ENCODE measurements at regions of chrX and their contacts with region 1.

Region 1: GRCh38 chrX:54540289-54540688 is 10.3 kb downstream of the GNL3L start:
- DNase-seq: no peak
- CTCF ChIP-seq: no peak

Region 2: DNA sequence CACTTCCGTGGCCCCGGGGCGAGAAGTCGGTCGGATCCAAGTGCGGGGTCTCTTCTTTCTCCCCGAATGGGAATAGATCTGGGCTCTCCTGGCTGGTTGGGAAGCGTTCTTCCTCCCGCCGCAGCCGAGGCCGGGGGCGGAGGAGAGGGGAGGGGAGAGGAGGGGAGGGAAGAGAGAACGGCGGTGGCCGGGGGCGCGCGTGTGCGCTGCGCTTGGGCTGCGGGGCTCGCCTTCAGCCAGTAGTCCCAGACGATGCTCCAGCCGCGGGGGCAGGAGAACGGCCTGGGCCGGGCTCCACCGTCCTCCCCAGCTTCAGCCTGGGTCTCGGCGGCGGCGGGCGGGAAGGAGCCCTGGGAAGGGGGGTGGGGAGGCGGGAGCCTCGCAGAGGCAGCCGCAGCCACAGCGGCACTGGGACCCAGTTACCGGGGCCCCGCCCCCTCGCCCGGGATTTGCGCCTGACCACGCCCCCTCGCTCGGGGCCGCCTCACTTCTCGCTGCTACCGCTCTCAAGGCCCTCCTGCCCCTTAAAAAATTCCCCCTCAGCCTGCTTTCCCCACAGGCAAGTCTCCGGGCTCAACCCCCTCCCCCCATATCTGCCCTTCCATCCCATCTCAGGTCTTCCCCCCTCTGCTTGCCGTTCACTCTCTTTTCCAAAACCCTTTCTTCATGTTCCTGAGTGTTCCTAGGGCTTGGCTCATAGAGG is 44.3 kb before region 1 on chrX and contains the start of gene FGD1:
- CTCF ChIA-PET with region 1: no interaction called
- POLR2A ChIA-PET with region 1: interaction called, 13 read pairs
- DNase-seq: peak; percentile 45
- CTCF ChIP-seq: no peak

Region 3: GRCh38 chrX:54551801-54552200 is 11.5 kb after region 1 on chrX:
- CTCF ChIA-PET with region 1: no interaction called
- POLR2A ChIA-PET with region 1: no interaction called
- DNase-seq: no peak
- CTCF ChIP-seq: no peak

Region 4: GRCh38 chrX:54639346-54640102 is 99.2 kb after region 1 on chrX:
- CTCF ChIA-PET with region 1: no interaction called
- POLR2A ChIA-PET with region 1: no interaction called
- DNase-seq: peak; percentile 82
- CTCF ChIP-seq: peak; percentile 43

Region 5: DNA sequence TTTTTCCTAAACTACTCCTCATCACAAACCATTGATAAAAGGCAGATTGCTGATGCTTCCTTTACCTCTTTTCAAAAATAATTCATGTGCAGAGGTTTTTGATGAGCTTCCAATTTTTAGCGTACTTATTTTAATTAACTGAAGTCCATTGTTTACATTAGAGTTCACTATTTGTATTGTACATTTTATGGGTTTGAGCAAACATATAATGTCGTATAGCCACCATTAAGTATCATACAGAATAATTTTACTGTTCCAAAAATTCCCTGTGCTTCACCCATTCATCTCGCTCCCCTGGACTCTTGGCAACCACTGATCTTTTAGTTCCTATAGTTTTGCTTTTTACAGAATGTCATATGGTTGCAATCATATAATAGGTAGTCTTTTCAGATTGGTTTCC is 143.4 kb after region 1 on chrX:
- CTCF ChIA-PET with region 1: no interaction called
- POLR2A ChIA-PET with region 1: no interaction called
- DNase-seq: no peak
- CTCF ChIP-seq: no peak